ENCODE measurements at regions of chr19 and their contacts with region 1.

Region 1: GRCh38 chr19:1455336-1456120 is 5.6 kb downstream of the APC2 start:
- DNase-seq: peak; percentile 76
- ATAC-seq: peak; percentile 52
- H3K4me3 ChIP-seq: peak overlapping the region in 2 of 3 experiments; percentile 25 to 51; a peak in 2 of 6 replicates
- H3K27ac ChIP-seq: no peak overlapping the region
- H3K4me1 ChIP-seq: peaks cover 48% of the 10 kb centered on the region
- H3K27me3 ChIP-seq: peaks cover 10 to 58% of the 10 kb centered on the region in 2 experiments
- CTCF ChIP-seq: no peak
- EP300 ChIP-seq: no peak
- POLR2A ChIP-seq: no peak
- RAD21 ChIP-seq: no peak

Region 2: GRCh38 chr19:1470203-1471009 is 14.9 kb after region 1 on chr19:
- CTCF ChIA-PET with region 1: no interaction called
- POLR2A ChIA-PET with region 1: interaction called, 15 read pairs
- in situ Hi-C with region 1: no loop called
- intact Hi-C with region 1: no loop called
- DNase-seq: no peak
- ATAC-seq: peak; percentile 40
- H3K4me3 ChIP-seq: peak overlapping the region; percentile 41 to 69 (median 54)
- H3K27ac ChIP-seq: no peak overlapping the region
- H3K4me1 ChIP-seq: peaks cover 25% of the 10 kb centered on the region
- H3K27me3 ChIP-seq: no peaks in the 10 kb centered on the region
- CTCF ChIP-seq: no peak
- EP300 ChIP-seq: no peak
- POLR2A ChIP-seq: no peak
- RAD21 ChIP-seq: no peak; the same call in 1 of the 2 replicates

Region 3: DNA sequence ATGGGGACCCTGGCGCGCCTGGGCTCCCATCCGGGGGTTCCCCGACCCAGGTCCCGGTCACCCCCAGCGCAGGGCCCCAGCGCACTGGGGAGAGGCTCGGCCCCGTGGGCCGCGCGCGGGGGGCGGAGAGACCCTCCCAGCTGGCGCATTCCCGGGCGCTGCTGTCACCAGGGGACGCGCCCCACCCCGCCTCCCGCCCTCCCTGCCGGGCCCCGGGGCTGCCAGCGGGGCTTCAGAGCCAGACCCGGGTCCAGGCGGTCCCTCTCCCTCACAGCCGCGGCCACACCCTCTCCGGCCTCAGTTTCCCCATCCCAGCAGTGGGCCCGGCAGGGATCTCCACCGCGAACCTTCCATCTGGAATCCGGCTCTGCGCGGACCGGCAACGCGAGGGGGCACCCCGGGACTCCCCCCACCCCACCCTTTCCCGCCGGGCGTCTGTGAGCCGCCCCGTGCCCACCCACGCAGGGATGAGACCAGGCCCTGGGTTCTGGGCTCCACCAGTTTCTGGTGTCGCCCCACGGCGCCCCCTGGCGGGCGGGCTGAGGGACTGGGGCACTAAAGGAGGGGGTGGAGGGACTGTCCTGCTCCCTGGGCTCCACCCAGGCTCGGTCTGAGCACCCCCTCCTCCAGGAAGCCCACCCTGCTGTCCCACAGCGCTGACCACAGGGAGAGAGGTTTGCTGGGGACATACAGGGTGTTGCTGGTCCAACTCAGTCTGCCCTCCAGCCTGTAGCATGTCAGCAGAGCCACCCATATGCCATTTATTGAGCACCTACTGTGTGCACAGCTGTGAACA is 58.2 kb after region 1 on chr19:
- CTCF ChIA-PET with region 1: no interaction called
- POLR2A ChIA-PET with region 1: no interaction called
- in situ Hi-C with region 1: loop called (anchors 5 kb)
- intact Hi-C with region 1: no loop called
- DNase-seq: no peak
- ATAC-seq: peak; percentile 70
- H3K4me3 ChIP-seq: peak overlapping the region; percentile 50 to 73 (median 71); a peak in 4 of 6 replicates
- H3K27ac ChIP-seq: no peak overlapping the region
- H3K4me1 ChIP-seq: peaks cover 34% of the 10 kb centered on the region
- H3K27me3 ChIP-seq: peaks cover 0 to 15% of the 10 kb centered on the region in 2 experiments; a peak in 3 of 5 replicates
- CTCF ChIP-seq: peak; percentile 80
- EP300 ChIP-seq: no peak
- POLR2A ChIP-seq: no peak
- RAD21 ChIP-seq: peak; percentile 59

Region 4: GRCh38 chr19:1560286-1560882 is 104.9 kb after region 1 on chr19:
- CTCF ChIA-PET with region 1: no interaction called
- POLR2A ChIA-PET with region 1: no interaction called
- in situ Hi-C with region 1: no loop called
- intact Hi-C with region 1: no loop called
- DNase-seq: no peak
- ATAC-seq: no peak
- H3K4me3 ChIP-seq: no peak overlapping the region
- H3K27ac ChIP-seq: no peak overlapping the region
- H3K4me1 ChIP-seq: no peaks in the 10 kb centered on the region
- H3K27me3 ChIP-seq: no peaks in the 10 kb centered on the region
- CTCF ChIP-seq: no peak
- EP300 ChIP-seq: no peak
- POLR2A ChIP-seq: no peak
- RAD21 ChIP-seq: no peak